Posterior cingulate gyrus (tissue), 11 donors: ENCODE measurements at regions of chr3 and their contacts with region 1.

Region 1: DNA sequence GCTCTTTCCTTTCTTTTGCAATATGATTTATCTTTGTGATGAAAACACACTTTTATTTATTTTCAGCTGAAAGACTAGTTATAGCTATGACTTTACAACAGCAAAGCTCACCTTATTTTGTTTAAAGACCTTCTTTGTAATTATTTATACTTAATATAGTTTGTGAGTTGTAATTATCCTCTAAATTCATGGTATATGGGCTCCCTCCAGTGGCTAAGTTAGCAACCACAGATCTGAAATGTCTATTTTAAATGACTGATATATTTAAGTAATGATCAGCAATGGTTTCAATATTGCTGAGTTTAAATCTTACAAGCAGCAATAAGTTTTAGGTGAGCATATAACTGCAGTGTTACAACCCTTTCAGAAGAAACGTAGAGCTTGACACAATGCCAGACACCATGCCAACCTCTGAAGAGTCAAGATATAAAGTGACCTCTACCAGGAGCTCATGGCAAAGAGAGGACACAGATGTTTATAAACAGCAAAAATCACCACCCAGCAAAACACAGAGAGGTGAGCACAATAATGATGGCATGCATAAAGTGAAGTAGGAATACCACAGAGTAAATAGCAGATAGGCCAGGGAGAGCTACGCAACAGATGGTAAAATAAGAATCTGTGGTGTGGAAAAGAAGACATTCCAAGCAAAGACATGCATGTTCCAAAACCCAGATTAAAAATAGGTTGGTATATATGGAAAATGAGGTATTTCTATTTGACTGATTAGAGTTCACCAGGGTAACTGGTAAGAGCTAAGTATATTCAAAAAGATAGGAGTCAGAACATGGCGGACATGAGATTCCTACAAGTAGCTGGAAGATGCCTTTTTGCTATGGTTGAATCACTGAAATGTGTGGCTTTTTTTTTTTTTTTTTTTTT is 143.7 kb upstream of the ZNF385D start:
- DNase-seq: no peak

Region 2: DNA sequence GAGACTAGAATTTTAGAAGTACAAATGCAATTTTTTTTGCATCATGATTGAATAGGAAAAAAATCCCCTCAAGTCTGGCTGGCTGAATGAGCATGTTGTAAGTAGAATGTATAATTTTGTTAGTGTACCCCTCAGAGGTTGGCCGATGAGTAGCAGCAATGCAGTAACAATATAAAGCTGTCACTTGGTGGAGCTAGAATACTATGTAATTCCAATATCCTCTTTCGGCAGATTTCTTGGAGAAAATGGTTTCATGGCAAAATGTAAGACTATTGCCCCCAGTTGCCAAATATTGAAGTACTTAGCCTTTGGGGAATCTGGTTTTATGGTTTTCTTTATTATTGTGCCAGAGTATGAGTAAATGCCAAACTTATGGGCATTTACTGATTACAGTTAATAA is 1668.9 kb before region 1 on chr3:
- intact Hi-C with region 1: loop called (anchors 10 kb)
- DNase-seq: no peak

Region 3: GRCh38 chr3:20511863-20512505 is 1382.7 kb before region 1 on chr3:
- intact Hi-C with region 1: loop called (anchors 10 kb)
- DNase-seq: peak in 2 of 10 donors; percentile 29 to 32

Region 4: DNA sequence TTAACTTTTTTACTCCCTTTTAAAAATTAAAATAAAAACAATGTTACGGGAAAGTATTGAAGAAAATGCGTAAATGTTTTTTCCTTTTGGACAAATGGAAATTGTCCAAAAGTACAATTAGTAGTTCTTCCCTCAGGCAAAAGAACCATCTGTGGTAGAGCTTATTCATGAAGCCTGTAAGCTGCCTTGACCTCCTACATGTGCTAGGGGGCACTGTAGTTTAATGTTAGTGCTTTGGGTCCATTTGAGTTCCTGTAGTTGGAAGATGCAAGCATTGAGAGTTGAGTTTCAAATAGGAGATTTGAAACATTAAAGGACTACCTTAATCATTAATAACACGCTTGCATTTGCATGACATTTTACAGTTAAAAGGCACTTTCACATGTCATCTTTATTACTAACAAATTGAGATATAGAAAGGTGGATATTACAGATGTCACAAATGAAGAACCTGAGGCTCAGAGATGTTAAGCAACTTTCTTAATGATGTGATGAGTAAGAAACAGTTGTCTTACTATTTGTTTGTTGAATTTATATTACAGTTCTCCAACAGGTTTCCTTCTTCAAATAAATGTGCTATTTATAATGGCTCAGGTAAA is 141.9 kb before region 1 on chr3:
- intact Hi-C with region 1: loop called (anchors 2 kb)
- DNase-seq: no peak

Region 5: GRCh38 chr3:21979706-21980105 is 85.0 kb after region 1 on chr3:
- intact Hi-C with region 1: no loop called
- DNase-seq: no peak

Region 6: GRCh38 chr3:22012471-22012870 is 117.8 kb after region 1 on chr3:
- intact Hi-C with region 1: no loop called
- DNase-seq: no peak